Activated T-helper 1 cell treated with anti-CD3 and anti-CD28 coated beads, Interleukin-12 subunit alpha, Interleukin-12 subunit beta, Interleukin-2, Interleukin-4 antibody, amounts not matched to agents 30 ng/mL and 10 ng/mL and 1 ng/mL, durations not matched to agents 14 hours and 24 hours and 36 hours (primary cell): ENCODE measurements at regions of chr11 and their contacts with region 1.

Region 1: GRCh38 chr11:65225279-65226102 is 36.3 kb upstream of the POLA2 start:
- DNase-seq: peak; percentile 34
- H3K4me3 Mint-ChIP-seq: peak overlapping the region; percentile 79
- H3K27ac Mint-ChIP-seq: no peak overlapping the region
- H3K4me1 Mint-ChIP-seq: peaks cover 9% of the 10 kb centered on the region
- H3K27me3 Mint-ChIP-seq: peaks cover 26% of the 10 kb centered on the region

Region 2: GRCh38 chr11:65251476-65251875 is 26.0 kb after region 1 on chr11:
- intact Hi-C with region 1: loop called (anchors 2 kb)
- DNase-seq: no peak
- H3K4me3 Mint-ChIP-seq: no peak overlapping the region
- H3K27ac Mint-ChIP-seq: no peak overlapping the region
- H3K4me1 Mint-ChIP-seq: peaks cover 5% of the 10 kb centered on the region
- H3K27me3 Mint-ChIP-seq: peaks cover 13% of the 10 kb centered on the region

Region 3: DNA sequence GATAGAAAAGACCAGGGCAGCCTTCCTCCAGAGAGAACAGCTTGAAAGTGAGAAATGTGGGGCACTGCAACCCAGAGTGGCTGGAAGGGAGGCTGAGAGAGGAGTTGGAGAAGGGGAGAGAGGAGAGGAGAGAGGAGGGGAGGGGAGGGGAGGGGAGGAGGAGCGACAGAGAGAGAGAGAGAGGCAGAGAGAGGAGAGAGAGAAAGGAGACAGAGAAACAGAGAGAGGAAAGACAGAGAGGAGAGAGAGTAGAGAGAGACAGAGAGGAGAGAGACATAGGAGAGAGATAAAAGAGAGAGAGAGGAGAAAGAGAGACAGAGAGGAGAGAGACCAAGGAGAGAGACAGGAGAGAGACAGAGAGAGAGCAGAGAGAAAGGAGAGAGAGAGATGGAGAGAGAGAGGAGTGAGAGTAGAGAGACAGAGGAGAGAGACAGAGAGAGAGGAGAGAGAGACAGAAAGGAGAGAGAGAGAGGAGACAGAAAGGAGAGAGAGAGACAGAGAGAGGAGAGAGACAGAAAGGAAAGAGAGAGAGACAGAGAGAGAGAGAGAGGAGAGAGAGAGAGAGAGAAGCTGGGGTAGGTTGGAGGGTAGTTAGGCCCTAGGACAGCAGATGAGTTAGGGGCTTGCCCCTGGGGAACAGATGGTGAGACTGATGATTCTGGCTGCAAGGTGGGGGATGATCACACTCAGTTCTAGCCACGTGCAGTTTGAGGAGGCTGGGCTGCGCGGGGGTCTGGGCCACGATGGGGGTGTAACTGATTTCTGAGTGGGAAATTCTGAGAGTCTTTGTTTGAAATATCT is 290.8 kb after region 1 on chr11:
- intact Hi-C with region 1: loop called (anchors 10 kb)
- DNase-seq: no peak
- H3K4me3 Mint-ChIP-seq: no peak overlapping the region
- H3K27ac Mint-ChIP-seq: peak overlapping the region; percentile 4
- H3K4me1 Mint-ChIP-seq: peaks cover 10% of the 10 kb centered on the region
- H3K27me3 Mint-ChIP-seq: no peaks in the 10 kb centered on the region

Region 4: DNA sequence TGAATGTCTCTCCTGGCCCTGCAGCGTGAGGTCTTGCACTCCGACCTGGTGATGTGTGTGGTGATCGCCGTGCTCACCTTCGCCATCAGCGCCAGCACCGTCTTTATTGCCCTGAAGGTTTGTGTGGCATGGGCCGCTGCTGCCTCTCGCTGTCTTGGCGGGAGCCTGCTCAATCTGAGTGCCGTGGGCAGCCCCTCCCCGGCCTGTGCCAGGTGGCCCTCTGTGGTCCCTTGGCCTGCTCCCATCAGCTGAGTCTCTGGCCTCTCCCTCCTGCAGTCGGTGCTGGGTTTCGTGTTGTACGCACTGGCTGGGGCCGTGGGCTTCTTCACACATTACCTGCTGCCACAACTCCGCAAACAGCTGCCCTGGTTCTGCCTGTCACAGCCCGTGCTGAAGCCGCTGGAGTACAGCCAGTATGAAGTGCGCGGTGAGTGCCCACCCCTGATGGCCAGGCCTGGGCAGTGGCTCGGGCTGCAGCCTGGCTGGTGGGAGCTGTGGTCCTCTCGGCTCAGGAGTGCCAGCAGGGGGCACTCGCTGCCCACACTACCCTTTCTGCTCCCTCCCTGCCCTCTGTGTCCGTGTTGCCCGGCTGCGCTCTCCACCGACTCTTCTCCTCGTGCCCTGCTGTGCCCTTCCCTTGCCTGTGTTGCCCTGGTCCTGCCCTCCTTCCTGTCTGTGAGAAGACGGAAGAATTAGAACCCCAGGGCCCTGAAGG is 400.3 kb after region 1 on chr11:
- intact Hi-C with region 1: no loop called
- DNase-seq: peak; percentile 35
- H3K4me3 Mint-ChIP-seq: no peak overlapping the region
- H3K27ac Mint-ChIP-seq: no peak overlapping the region
- H3K4me1 Mint-ChIP-seq: no peaks in the 10 kb centered on the region
- H3K27me3 Mint-ChIP-seq: no peaks in the 10 kb centered on the region